Sigmoid colon (tissue), 7 donors: ENCODE measurements at regions of chr1 and their contacts with region 1.

Region 1: DNA sequence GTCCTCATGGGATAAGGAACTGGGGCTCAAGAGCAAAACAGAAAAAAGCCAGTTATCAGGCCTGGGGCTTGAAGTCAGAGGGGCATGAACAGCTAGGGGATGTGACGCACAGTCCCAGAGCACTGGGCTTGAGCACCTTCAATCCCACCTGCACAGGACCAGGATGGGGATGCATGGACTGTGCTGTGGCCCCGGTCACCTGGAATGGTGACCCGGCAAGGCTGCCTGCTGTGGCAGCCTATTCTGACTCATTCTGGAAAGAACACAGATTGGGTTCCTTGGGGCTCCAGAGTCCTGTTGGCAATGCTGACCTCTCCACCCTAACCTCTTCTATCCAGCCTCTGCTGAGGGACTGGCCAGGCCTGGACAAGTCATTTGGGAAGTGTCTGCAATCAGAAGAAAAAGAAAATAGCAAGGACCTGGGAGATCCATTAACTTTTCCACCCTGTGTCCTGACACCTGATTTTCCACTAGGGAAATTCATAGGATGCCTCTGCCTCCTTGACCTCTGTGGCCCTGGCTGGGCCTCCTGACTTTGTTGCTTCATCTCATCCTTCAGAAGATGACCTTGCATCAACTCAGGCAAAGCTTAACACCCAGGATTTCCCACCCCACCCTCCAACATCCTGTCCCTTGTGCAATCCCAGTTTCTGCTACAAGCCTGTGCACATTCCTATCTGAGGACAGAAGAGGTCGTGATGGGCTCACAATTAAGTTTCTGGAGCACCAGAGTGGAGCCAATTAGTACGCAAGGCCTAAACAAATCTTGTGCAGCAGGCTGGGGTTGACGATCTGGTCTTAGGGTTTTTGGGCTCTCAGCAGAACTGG is 17.9 kb upstream of the FMOD start:
- DNase-seq: peak; percentile 94
- H3K4me3 ChIP-seq: no peak overlapping the region
- H3K27ac ChIP-seq: peak overlapping the region; percentile 46 to 55 (median 50)
- H3K4me1 ChIP-seq: peaks cover 0 to 21% (median 14%) of the 10 kb centered on the region in 4 donors
- H3K27me3 ChIP-seq: no peaks in the 10 kb centered on the region
- CTCF ChIP-seq: peak in 3 of 4 experiments; percentile 23 to 48 (median 38)
- EP300 ChIP-seq: no peak
- POLR2A ChIP-seq: no peak

Region 2: GRCh38 chr1:203084588-203085502 is 284.0 kb before region 1 on chr1:
- intact Hi-C with region 1: no loop called
- DNase-seq: peak; percentile 56
- H3K4me3 ChIP-seq: no peak overlapping the region
- H3K27ac ChIP-seq: no peak overlapping the region
- H3K4me1 ChIP-seq: no peaks in the 10 kb centered on the region
- H3K27me3 ChIP-seq: peaks cover 0 to 14% (median 0%) of the 10 kb centered on the region in 3 donors
- CTCF ChIP-seq: no peak
- EP300 ChIP-seq: no peak
- POLR2A ChIP-seq: no peak

Region 3: DNA sequence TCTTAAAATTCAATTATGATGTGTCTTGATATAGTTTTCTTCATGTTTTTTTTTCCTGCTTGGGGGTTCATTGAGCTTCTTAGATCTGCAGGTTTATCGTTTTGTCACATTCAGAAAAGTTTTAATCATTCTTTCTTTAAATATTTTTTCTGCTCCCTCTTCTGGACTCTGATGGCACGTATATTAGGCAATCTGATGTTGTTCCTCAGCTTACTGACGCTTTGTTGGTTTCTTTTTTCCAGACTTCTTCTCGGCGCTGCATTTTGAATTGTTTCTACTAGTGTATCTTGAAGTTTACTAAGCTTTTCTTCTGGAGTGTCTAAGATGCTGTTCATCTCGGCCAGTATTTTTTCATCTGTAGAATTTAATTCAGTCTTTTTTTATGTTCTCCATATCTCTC is 26.9 kb after region 1 on chr1:
- intact Hi-C with region 1: no loop called
- DNase-seq: no peak
- H3K4me3 ChIP-seq: no peak overlapping the region
- H3K27ac ChIP-seq: no peak overlapping the region
- H3K4me1 ChIP-seq: peaks cover 0 to 4% (median 0%) of the 10 kb centered on the region in 4 donors
- H3K27me3 ChIP-seq: no peaks in the 10 kb centered on the region
- CTCF ChIP-seq: no peak
- EP300 ChIP-seq: no peak
- POLR2A ChIP-seq: no peak

Region 4: DNA sequence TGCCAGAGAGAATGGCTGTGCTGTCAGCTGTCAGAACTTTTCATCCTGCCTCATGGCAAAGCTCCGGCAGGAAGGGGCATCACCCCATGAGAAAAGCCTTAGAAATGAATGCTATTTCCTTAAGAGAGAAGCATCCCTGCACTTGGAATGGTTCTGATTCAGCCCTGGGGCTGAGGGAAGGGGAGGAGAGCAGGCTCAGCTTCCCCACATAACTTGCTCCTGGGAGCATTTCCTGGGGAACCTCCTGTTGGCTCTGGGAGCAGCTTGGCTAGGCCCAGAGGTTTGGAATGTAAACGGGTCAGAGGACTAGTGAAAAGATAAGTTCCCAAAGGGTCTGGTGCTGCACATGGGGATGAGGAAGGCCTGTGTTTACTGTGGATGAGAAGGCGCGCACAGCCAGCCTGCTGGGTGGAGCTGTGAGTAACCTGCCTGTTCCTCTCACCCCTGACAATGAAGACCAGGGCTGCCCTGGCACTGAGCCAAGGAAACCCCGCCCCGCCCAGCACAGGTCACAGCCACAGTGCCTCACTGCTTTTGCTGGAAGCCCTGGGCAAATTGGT is 111.8 kb after region 1 on chr1:
- intact Hi-C with region 1: loop called (anchors 2 kb)
- DNase-seq: peak; percentile 94
- H3K4me3 ChIP-seq: peak overlapping the region; percentile 18 to 66 (median 64)
- H3K27ac ChIP-seq: peak overlapping the region; percentile 87 to 96 (median 91)
- H3K4me1 ChIP-seq: peaks cover 0 to 80% (median 69%) of the 10 kb centered on the region in 4 donors
- H3K27me3 ChIP-seq: no peaks in the 10 kb centered on the region
- CTCF ChIP-seq: no peak
- EP300 ChIP-seq: peak in 1 of 4 donors; percentile 65
- POLR2A ChIP-seq: no peak